Activated CD8-positive, alpha-beta memory T cell treated with anti-CD3 and anti-CD28 coated beads, Interleukin-2, amount 10 ng/mL, durations not matched to agents 7 days and 5 days (primary cell): ENCODE measurements at regions of chr1 and their contacts with region 1.

Region 1: DNA sequence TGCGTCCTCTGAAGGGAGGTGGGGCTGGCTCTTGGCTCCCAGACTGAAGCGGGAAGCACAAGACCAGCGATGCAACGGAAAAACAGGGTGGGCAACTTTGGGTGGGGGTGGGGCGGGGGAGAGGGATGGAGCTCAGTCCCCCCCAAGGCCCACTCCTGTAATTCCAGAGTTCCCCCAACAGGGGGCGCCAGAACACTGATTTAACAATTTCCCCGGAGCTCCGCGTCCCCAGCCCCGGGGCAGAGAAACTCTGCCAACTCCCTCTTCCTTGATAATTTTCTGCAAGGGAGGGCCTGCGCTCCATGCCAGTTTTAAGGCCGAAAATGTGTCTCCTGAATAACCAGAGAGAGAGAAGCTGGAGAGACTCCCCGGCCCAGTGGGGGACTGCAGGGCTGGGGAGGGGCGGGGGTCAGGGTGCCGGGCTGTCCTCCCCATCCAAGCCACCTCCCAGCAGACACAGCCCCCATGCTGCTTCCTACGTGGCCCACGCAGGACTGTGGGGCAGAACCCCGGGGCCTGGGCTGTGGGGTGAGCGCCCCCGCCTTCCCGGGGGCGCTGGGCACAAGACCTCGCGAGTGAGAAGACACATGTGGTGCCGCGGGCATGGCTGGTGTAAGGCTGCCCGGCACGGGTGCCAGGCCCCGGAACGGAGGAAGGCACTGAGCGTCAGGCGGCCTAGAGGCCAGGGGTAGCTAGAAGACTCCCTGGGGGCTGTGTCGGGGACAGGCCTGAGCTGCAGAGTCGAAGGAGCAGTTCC is 51.4 kb downstream of the KIF21B start:
- DNase-seq: peak; percentile 54
- ATAC-seq: no peak
- H3K4me3 Mint-ChIP-seq: no peak overlapping the region
- H3K27ac Mint-ChIP-seq: no peak overlapping the region
- H3K4me1 Mint-ChIP-seq: no peaks in the 10 kb centered on the region
- H3K27me3 Mint-ChIP-seq: no peaks in the 10 kb centered on the region

Region 2: GRCh38 chr1:201016211-201016651 is 44.1 kb after region 1 on chr1:
- CTCF ChIA-PET with region 1: interaction called, 23 read pairs
- DNase-seq: no peak
- ATAC-seq: no peak
- H3K4me3 Mint-ChIP-seq: peak overlapping the region; percentile 51
- H3K27ac Mint-ChIP-seq: peak overlapping the region; percentile 99
- H3K4me1 Mint-ChIP-seq: peaks cover 96% of the 10 kb centered on the region
- H3K27me3 Mint-ChIP-seq: no peaks in the 10 kb centered on the region

Region 3: GRCh38 chr1:201023517-201023902 is 51.4 kb after region 1 on chr1 and contains the start of gene KIF21B:
- CTCF ChIA-PET with region 1: interaction called, 39 read pairs
- DNase-seq: peak; percentile 93
- ATAC-seq: peak; percentile 78
- H3K4me3 Mint-ChIP-seq: peak within 1 kb of the TSS; percentile 91
- H3K27ac Mint-ChIP-seq: peak within 1 kb of the TSS; percentile 99
- H3K4me1 Mint-ChIP-seq: peaks cover 72% of the 10 kb centered on the region
- H3K27me3 Mint-ChIP-seq: no peaks in the 10 kb centered on the region
- total RNA-seq, gene KIF21B: 102 to 155 TPM

Region 4: GRCh38 chr1:201042779-201043461 is 70.8 kb after region 1 on chr1:
- CTCF ChIA-PET with region 1: interaction called, 113 read pairs
- DNase-seq: peak; percentile 80
- ATAC-seq: peak; percentile 94
- H3K4me3 Mint-ChIP-seq: no peak overlapping the region
- H3K27ac Mint-ChIP-seq: no peak overlapping the region
- H3K4me1 Mint-ChIP-seq: peaks cover 4% of the 10 kb centered on the region
- H3K27me3 Mint-ChIP-seq: peaks cover 12% of the 10 kb centered on the region

Region 5: GRCh38 chr1:201049248-201049831 is 77.2 kb after region 1 on chr1:
- CTCF ChIA-PET with region 1: interaction called, 113 read pairs
- DNase-seq: no peak
- ATAC-seq: no peak
- H3K4me3 Mint-ChIP-seq: no peak overlapping the region
- H3K27ac Mint-ChIP-seq: no peak overlapping the region
- H3K4me1 Mint-ChIP-seq: peaks cover 10% of the 10 kb centered on the region
- H3K27me3 Mint-ChIP-seq: peaks cover 28% of the 10 kb centered on the region

Region 6: DNA sequence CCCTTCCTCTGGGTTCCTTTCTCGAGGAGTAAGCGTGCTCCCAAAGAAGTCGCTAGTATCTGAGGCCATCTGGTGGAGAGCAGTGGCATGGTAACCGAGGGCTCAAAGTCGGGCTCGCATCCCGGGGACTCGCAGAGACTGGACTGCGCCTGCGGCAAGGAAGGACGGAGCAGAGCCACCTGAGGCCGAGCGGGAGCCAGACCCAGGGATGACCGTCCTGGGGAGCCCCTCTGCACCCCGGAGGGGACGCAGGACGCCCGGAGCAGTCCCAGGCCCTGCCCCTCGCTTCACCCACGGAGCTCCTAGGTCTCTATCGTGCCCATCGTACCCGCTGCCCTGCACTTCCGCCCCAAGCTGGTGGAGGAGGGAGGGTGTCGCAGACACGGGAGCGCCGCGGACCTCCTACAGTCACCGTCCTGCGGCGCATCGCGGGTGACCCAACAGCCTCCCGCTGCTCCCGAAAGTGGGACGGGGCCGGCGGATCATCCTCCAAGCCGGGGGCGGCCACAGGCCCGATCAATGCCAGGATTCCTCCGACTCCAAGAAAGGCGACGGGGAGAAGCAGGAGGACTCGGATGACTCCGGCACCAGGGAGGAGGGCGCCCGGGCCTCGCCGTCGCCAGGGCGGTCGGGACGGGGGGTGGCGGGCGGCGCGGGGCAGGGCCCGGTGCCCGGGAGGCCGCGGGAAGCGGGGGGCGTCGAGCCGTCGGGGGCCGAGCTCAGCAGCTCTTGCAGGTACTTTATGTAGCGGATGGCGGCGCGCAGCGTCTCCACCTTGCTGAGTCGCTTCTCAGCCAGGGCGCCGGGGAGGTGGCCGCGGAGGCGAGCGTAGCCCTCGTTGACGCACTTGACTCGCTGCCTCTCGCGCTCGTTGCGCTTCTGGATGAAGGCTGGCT is 142.4 kb after region 1 on chr1:
- CTCF ChIA-PET with region 1: interaction called, 21 read pairs
- DNase-seq: peak; percentile 82
- ATAC-seq: peak; percentile 92
- H3K4me3 Mint-ChIP-seq: peak overlapping the region; percentile 71
- H3K27ac Mint-ChIP-seq: no peak overlapping the region
- H3K4me1 Mint-ChIP-seq: peaks cover 5% of the 10 kb centered on the region
- H3K27me3 Mint-ChIP-seq: peaks cover 46% of the 10 kb centered on the region

Region 7: GRCh38 chr1:201119206-201120197 is 147.4 kb after region 1 on chr1:
- CTCF ChIA-PET with region 1: interaction called, 21 read pairs
- DNase-seq: peak; percentile 69
- ATAC-seq: peak; percentile 32
- H3K4me3 Mint-ChIP-seq: no peak overlapping the region
- H3K27ac Mint-ChIP-seq: no peak overlapping the region
- H3K4me1 Mint-ChIP-seq: peaks cover under 1% of the 10 kb centered on the region
- H3K27me3 Mint-ChIP-seq: peaks cover 45% of the 10 kb centered on the region